BJ (cell line): ENCODE measurements at regions of chr6 and their contacts with region 1.

Region 1: GRCh38 chr6:56914798-56915658 is 39.9 kb upstream of the BEND6 start:
- DNase-seq: no peak
- H3K4me3 ChIP-seq: no peak overlapping the region
- H3K27me3 ChIP-seq: no peaks in the 10 kb centered on the region
- CTCF ChIP-seq: no peak

Region 2: GRCh38 chr6:56542364-56543331 is 372.4 kb before region 1 on chr6:
- CTCF ChIA-PET with region 1: no interaction called
- POLR2A ChIA-PET with region 1: interaction called, 10 read pairs
- DNase-seq: peak; percentile 95
- H3K4me3 ChIP-seq: peak overlapping the region; percentile 59
- H3K27me3 ChIP-seq: no peaks in the 10 kb centered on the region
- CTCF ChIP-seq: peak; percentile 49